Caco-2 (cell line): ENCODE measurements at regions of chr5 and their contacts with region 1.

Region 1: GRCh38 chr5:76256116-76256889 is 146.8 kb upstream of the IQGAP2 start:
- DNase-seq: peak; percentile 67 to 68
- H3K4me3 ChIP-seq: no peak overlapping the region
- H3K4me3 Mint-ChIP-seq: no peak overlapping the region
- H3K27ac Mint-ChIP-seq: no peak overlapping the region
- H3K4me1 ChIP-seq: peaks cover 4% of the 10 kb centered on the region; the same call in 1 of the 2 replicates
- H3K4me1 Mint-ChIP-seq: no peaks in the 10 kb centered on the region
- H3K27me3 ChIP-seq: no peaks in the 10 kb centered on the region
- H3K27me3 Mint-ChIP-seq: peaks cover 12% of the 10 kb centered on the region
- CTCF ChIP-seq: peak; percentile 71 to 73

Region 2: DNA sequence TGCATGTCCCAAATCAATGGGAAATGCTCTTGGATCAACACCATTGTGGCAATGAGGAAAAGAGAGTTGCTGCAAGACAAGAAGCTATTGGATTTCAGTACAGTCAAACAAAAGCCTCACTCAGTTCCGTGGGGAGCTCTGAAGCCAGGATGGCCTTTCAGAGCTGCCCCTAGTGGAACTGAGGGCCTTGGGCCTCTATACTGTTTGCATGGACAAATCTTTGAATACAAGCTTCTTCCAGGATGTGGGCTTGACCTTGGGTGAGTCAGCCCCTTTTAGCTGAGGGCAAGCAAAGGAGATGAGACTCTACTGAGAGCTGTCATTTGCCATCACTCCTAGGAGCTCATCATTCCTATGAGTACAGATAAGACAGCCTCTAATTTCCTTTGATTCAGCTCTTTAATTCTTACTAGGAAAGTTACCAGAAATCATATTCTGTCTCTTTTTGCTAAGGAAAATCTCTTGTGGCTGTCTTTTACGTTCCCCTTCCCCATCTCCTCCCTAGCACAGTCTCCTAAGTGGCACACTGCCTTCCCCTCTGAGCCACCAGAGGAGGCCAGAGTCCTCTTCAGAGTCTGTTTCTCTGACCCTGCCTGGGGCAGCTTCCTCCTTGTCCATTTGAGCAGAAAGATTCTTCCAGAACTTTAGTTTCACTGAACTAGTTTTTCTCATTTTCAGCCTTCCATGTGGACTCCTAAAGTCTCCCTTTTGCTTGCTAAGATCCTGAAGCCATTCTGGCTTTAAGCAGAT is 370.3 kb before region 1 on chr5:
- CTCF ChIA-PET with region 1: interaction called, 5 read pairs
- POLR2A ChIA-PET with region 1: no interaction called
- intact Hi-C with region 1: loop called (anchors 10 kb)
- DNase-seq: peak in 1 of 2 experiments; percentile 13
- H3K4me3 ChIP-seq: no peak overlapping the region
- H3K4me3 Mint-ChIP-seq: no peak overlapping the region
- H3K27ac Mint-ChIP-seq: no peak overlapping the region
- H3K4me1 ChIP-seq: no peaks in the 10 kb centered on the region
- H3K4me1 Mint-ChIP-seq: no peaks in the 10 kb centered on the region
- H3K27me3 ChIP-seq: no peaks in the 10 kb centered on the region
- H3K27me3 Mint-ChIP-seq: no peaks in the 10 kb centered on the region
- CTCF ChIP-seq: peak; percentile 24 to 59

Region 3: DNA sequence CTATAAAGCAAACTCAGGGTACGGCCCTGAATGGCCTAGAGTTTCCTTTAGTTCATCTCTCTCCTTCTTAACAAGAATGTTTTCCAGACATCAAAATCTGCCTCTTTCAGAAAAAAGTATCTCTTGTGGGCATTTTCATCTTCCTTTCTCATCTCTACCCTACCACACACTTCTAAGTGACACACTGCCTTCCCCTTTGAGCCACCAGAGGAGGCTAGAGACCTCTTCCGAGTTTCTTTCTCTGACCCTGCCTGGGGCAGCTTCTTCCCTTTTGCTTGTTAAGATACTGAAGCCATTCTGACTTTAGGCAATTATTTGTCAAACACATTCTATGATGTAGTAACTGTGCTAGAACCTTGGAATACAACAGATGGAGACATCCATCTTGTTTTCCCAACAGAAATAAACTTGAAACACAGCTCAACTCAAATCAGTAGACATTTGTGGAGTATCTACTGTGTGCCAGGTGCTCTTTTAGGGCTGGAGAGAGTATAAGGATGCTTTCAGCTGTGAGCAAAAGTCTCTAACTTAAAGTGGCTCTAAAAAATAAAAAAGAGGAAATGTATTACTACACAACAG is 181.7 kb before region 1 on chr5:
- CTCF ChIA-PET with region 1: no interaction called
- POLR2A ChIA-PET with region 1: no interaction called
- intact Hi-C with region 1: loop called (anchors 1 kb)
- DNase-seq: peak in 1 of 2 experiments; percentile 18
- H3K4me3 ChIP-seq: no peak overlapping the region
- H3K4me3 Mint-ChIP-seq: no peak overlapping the region
- H3K27ac Mint-ChIP-seq: no peak overlapping the region
- H3K4me1 ChIP-seq: no peaks in the 10 kb centered on the region
- H3K4me1 Mint-ChIP-seq: no peaks in the 10 kb centered on the region
- H3K27me3 ChIP-seq: no peaks in the 10 kb centered on the region
- H3K27me3 Mint-ChIP-seq: peaks cover 25% of the 10 kb centered on the region
- CTCF ChIP-seq: peak; percentile 51 to 79

Region 4: DNA sequence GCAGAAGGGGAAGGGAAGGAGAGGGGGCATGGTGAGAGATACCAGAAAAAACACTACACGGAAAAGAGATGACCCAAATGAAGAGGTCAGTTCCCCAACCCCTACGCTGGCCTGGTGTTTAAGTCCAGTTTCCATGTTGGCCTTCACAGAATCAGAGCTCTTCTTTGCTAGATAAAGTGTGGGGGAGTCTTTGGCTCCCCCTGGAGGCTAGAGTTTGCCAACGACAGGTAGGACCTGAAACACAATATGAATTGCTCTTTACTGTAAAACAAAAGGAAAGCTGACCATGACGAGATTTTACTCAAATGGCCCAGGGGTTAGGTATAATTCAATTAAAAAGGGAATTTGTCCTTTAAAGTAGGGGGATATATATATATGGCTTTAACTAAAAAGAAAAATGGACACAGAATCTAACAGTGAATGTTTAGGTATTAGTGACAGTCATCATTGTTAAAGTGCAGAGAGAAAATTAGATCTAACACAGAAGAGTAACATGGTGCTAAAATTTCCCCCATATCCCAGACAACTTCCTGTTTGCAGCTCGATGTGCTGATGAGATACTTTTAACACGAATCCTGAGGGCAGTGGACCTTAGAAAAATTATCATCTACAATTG is 81.1 kb before region 1 on chr5:
- CTCF ChIA-PET with region 1: interaction called, 4 read pairs
- POLR2A ChIA-PET with region 1: no interaction called
- intact Hi-C with region 1: loop called (anchors 10 kb)
- DNase-seq: peak; percentile 47 to 56
- H3K4me3 ChIP-seq: no peak overlapping the region
- H3K4me3 Mint-ChIP-seq: no peak overlapping the region
- H3K27ac Mint-ChIP-seq: no peak overlapping the region
- H3K4me1 ChIP-seq: no peaks in the 10 kb centered on the region
- H3K4me1 Mint-ChIP-seq: no peaks in the 10 kb centered on the region
- H3K27me3 ChIP-seq: no peaks in the 10 kb centered on the region
- H3K27me3 Mint-ChIP-seq: no peaks in the 10 kb centered on the region
- CTCF ChIP-seq: peak; percentile 77 to 84